Activated B cell treated with CpG ODN at 0.5 μM for 24 hours (primary cell): ENCODE measurements at regions of chr15 and their contacts with region 1.

Region 1: DNA sequence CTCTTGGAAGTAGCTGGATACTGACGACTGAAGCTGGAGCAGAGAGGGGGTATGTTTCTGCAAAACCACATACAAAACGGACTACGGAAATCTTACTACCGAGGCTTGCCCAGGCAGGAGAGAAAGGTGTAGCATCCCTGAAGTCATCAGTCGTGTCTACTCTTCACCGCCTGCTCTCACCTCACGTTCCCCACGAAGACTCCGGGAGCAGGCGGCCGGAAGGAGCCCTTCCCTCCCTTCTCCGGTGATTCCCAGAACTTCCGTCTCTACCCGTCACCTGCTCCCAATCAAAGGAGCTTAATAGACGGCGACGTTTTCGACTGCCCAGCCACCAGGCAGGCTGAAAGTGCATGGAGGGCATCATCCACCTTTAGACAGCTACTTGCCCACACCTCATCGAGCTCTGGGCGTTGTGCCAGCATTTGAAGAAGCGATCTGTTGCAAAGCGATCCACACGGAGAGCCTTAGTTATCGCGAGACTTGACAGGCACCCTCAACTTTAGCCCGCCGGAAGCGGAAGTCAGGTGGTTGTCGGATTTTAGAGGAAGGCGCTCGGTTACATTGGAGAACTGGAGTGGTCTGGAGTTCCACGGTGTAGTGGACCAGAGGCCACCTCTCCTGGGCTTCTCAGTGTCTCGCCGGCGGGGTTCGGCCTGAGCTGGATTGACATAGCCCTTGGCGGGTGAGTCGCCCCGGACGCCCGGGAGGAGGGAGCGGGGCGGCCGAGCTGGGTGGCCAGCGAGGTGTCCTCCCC is at the start of gene RAMAC:
- DNase-seq: peak; percentile 79
- ATAC-seq: peak; percentile 95
- H3K4me3 Mint-ChIP-seq: peak within 1 kb of the TSS; percentile 99
- H3K27ac Mint-ChIP-seq: peak within 1 kb of the TSS; percentile 92
- H3K4me1 Mint-ChIP-seq: peaks cover 23% of the 10 kb centered on the region
- H3K27me3 Mint-ChIP-seq: no peaks in the 10 kb centered on the region
- CTCF ChIP-seq: no peak
- total RNA-seq, gene RAMAC: 23.4 and 24.7 TPM in 2 replicates

Region 2: DNA sequence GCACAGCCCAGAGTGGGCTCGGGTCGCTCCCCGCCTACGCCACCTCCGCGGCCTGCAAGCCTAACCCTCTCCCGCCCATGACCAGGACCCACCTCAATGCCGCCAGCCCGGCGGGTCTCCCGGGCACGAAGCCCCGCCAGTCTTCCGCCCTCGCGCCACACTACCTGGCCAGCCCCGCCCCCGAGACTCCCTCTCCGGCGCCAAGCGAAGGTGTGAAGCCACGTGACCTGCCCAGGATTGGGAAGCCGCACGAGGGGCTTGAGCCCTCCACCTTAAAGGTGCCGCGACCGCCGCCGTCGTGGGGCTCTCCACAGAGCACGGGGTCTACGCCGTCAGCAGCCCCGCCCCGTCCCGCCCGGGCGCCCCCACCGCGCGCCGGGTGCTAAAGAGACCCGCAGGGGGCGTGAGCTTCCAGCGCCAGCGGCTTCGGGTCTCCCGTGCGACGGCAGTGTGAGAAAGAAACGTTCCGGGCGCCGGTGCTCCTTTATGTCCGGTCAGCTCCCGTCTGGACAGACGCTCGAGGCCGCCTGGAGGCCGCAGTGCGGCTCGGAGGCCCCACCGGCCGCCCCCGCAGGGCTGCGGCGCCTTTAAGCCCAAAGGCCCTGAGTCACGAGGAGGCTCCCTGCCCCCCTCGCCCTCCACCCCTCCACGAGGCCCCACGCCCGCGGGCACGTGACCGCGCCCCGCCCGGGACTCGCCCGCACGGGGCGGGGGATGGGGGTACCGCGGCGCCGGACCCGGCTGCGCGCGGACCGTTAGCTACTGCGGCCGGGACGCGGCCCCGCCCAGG is 338.6 kb before region 1 on chr15 and contains the start of gene CPEB1:
- CTCF ChIA-PET with region 1: no interaction called
- POLR2A ChIA-PET with region 1: no interaction called
- intact Hi-C with region 1: loop called (anchors 5 kb)
- DNase-seq: peak; percentile 24
- ATAC-seq: peak; percentile 57
- H3K4me3 Mint-ChIP-seq: peak within 1 kb of the TSS; percentile 54
- H3K27ac Mint-ChIP-seq: no peak within 1 kb of the TSS
- H3K4me1 Mint-ChIP-seq: peaks cover 5% of the 10 kb centered on the region
- H3K27me3 Mint-ChIP-seq: peaks cover 55% of the 10 kb centered on the region
- CTCF ChIP-seq: no peak
- total RNA-seq, gene CPEB1: not detected in 2 replicates

Region 3: DNA sequence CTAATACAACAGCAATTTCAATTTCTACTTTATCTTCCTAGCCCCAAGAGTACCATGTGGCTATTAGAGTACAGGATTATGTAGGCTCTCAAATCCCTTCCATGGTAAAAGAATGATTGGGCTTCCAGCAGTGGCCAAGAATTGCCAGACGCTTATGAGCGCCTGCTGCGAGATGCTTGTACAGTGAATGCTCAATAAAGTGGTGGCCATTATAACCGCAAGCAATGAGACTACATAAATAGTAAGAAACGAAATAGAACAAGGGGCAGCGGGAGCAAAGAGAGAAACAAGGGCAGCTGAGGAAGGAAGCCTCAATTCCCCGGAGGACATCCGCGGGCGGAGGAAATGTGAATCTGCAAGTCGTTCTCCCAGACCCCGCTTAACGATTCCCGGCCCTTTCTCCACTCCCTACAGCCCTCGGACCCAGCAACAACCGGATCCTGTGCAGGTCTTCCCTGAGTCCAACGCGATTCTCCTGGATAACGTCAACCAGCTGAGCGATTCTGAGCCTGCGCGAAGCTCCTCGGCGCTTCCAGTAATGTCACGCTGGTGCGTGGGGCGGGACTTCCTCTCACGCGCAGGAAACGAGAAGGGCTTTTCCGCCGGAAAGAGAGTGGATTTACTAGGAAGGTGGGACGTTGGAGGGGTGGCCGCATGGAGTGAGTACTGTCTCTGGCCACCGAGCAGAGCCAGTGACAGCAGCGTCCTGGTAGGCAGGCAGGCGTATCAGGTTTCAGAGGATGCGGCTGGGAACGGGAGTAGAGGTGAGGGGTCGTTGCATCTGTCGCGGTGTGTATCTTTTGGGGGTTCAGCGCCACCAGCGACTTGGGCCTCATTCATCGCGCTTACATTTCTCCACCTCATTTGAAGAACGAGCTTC is 235.7 kb before region 1 on chr15:
- CTCF ChIA-PET with region 1: no interaction called
- POLR2A ChIA-PET with region 1: interaction called, 7 read pairs
- intact Hi-C with region 1: loop called (anchors 2 kb)
- DNase-seq: peak; percentile 76
- ATAC-seq: peak; percentile 95
- H3K4me3 Mint-ChIP-seq: peak overlapping the region; percentile 100
- H3K27ac Mint-ChIP-seq: peak overlapping the region; percentile 94
- H3K4me1 Mint-ChIP-seq: peaks cover 44% of the 10 kb centered on the region
- H3K27me3 Mint-ChIP-seq: no peaks in the 10 kb centered on the region
- CTCF ChIP-seq: no peak

Region 4: GRCh38 chr15:82843566-82843965 is 142.3 kb before region 1 on chr15:
- CTCF ChIA-PET with region 1: interaction called, 7 read pairs
- POLR2A ChIA-PET with region 1: interaction called, 12 read pairs
- intact Hi-C with region 1: no loop called
- DNase-seq: no peak
- ATAC-seq: no peak
- H3K4me3 Mint-ChIP-seq: peak overlapping the region; percentile 28
- H3K27ac Mint-ChIP-seq: peak overlapping the region; percentile 53
- H3K4me1 Mint-ChIP-seq: peaks cover 31% of the 10 kb centered on the region
- H3K27me3 Mint-ChIP-seq: no peaks in the 10 kb centered on the region
- CTCF ChIP-seq: no peak

Region 5: DNA sequence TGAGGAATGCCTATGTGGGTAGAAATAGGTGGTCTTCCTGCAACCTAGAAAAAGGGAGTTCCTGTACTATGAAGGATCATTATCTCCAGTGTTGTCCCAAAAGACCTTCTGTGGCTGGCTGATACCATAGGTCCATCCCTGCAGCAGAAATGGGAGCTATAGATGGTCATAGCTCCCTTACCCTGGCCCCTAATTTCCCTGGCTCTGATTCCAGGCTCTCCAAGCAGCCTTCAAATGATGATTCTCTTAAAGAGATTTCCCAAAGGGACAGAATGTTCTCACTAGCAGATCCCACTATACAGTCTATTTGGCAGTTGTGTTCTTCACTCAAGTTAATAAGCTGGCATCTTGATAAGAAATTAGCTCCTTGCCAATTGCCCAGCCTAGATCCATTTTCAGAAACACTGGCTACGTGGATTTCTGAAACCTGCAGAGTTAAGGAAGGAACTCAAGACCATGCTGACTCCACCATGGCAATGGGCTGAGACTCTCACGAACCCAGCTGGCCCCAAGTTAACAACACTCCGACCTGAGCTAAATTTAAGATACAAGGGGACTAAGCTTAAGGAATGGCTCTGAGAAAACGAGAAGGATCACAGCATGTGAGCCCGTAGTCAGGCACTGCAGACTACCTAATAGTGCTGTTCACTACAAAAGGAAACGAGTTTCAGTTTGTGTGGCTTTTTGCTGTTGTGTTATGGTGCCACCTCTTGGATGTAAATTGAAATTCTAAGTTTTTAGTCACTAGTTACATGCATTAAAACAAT is 14.2 kb after region 1 on chr15:
- CTCF ChIA-PET with region 1: interaction called, 13 read pairs
- POLR2A ChIA-PET with region 1: interaction called, 5 read pairs
- intact Hi-C with region 1: no loop called
- DNase-seq: no peak
- ATAC-seq: peak; percentile 85
- H3K4me3 Mint-ChIP-seq: peak overlapping the region; percentile 72
- H3K27ac Mint-ChIP-seq: peak overlapping the region; percentile 47
- H3K4me1 Mint-ChIP-seq: peaks cover 7% of the 10 kb centered on the region
- H3K27me3 Mint-ChIP-seq: no peaks in the 10 kb centered on the region
- CTCF ChIP-seq: no peak

Region 6: GRCh38 chr15:83626171-83626802 is 640.4 kb after region 1 on chr15:
- CTCF ChIA-PET with region 1: no interaction called
- POLR2A ChIA-PET with region 1: no interaction called
- intact Hi-C with region 1: no loop called
- DNase-seq: no peak
- ATAC-seq: no peak
- H3K4me3 Mint-ChIP-seq: no peak overlapping the region
- H3K27ac Mint-ChIP-seq: no peak overlapping the region
- H3K4me1 Mint-ChIP-seq: no peaks in the 10 kb centered on the region
- H3K27me3 Mint-ChIP-seq: peaks cover 3% of the 10 kb centered on the region
- CTCF ChIP-seq: no peak

Region 7: GRCh38 chr15:84840741-84841429 is 1855.0 kb after region 1 on chr15:
- CTCF ChIA-PET with region 1: no interaction called
- POLR2A ChIA-PET with region 1: no interaction called
- intact Hi-C with region 1: no loop called
- DNase-seq: no peak
- ATAC-seq: no peak
- H3K4me3 Mint-ChIP-seq: no peak overlapping the region
- H3K27ac Mint-ChIP-seq: no peak overlapping the region
- H3K4me1 Mint-ChIP-seq: no peaks in the 10 kb centered on the region
- H3K27me3 Mint-ChIP-seq: no peaks in the 10 kb centered on the region
- CTCF ChIP-seq: no peak